AG04450 (cell line): ENCODE measurements at regions of chr1 and their contacts with region 1.

Region 1: DNA sequence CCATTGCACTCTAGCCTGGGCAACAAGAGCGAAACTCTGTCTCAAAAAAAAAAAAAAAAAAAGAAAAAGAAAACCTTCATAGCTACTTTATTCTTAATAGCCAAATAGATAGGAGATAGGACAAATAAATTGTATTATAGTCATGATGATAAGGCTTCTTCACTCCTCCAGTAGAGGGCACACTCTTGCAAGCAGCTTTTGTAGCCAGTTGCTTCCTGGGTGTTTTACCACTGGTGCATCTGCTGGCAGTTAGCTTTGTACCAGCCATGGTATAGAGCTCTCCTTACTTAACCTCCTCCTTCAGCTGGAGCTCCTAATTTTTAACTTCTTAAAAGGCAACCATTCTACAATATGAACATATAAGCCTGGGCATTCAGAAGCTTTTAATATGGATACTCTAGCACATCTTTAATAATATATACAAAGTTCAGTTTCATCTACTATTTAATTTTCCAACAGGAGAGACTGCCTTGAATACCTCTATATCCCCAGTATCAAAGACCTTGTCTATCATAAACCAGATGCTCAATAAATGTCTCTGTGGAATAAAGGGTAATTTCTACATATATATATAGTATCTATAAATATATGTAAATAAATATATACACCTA is 35.8 kb downstream of the EVI5 start:
- DNase-seq: no peak
- H3K4me3 ChIP-seq: no peak overlapping the region
- H3K27ac ChIP-seq: no peak overlapping the region
- H3K27me3 ChIP-seq: no peaks in the 10 kb centered on the region
- CTCF ChIP-seq: peak; percentile 78

Region 2: GRCh38 chr1:92736395-92736794 is 12.7 kb before region 1 on chr1:
- CTCF ChIA-PET with region 1: interaction called, 15 read pairs
- POLR2A ChIA-PET with region 1: no interaction called
- DNase-seq: no peak
- H3K4me3 ChIP-seq: no peak overlapping the region
- H3K27ac ChIP-seq: no peak overlapping the region
- H3K27me3 ChIP-seq: no peaks in the 10 kb centered on the region
- CTCF ChIP-seq: peak; percentile 46

Region 3: DNA sequence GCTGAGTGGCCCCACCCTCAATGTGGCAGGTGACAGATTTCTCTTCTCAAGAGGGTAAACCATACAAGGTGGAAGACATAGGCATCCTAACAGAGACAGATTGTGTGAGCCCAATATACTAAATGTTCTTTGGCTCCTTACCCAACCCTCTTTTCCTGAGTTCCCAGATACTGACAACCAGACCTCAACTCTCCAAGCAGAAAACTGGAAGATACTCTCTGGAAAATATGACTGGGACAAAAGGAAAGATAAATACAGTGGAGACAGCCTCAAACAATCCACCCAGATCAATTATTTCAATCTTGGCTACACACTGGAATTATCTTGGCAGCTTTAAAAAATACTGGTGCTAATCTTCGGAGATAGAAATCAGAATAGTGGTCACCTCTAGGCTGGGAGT is 29.2 kb after region 1 on chr1:
- CTCF ChIA-PET with region 1: interaction called, 16 read pairs
- POLR2A ChIA-PET with region 1: no interaction called
- DNase-seq: no peak
- H3K4me3 ChIP-seq: no peak overlapping the region
- H3K27ac ChIP-seq: no peak overlapping the region
- H3K27me3 ChIP-seq: no peaks in the 10 kb centered on the region
- CTCF ChIP-seq: no peak

Region 4: GRCh38 chr1:92817986-92818764 is 69.0 kb after region 1 on chr1:
- CTCF ChIA-PET with region 1: interaction called, 57 read pairs
- POLR2A ChIA-PET with region 1: no interaction called
- DNase-seq: no peak
- H3K4me3 ChIP-seq: no peak overlapping the region
- H3K27ac ChIP-seq: no peak overlapping the region
- H3K27me3 ChIP-seq: no peaks in the 10 kb centered on the region
- CTCF ChIP-seq: peak; percentile 74

Region 5: GRCh38 chr1:92837062-92837461 is 87.9 kb after region 1 on chr1:
- CTCF ChIA-PET with region 1: interaction called, 14 read pairs
- POLR2A ChIA-PET with region 1: interaction called, 12 read pairs
- DNase-seq: no peak
- H3K4me3 ChIP-seq: no peak overlapping the region
- H3K27ac ChIP-seq: no peak overlapping the region
- H3K27me3 ChIP-seq: no peaks in the 10 kb centered on the region
- CTCF ChIP-seq: no peak

Region 6: GRCh38 chr1:93061895-93062792 is 313.0 kb after region 1 on chr1:
- CTCF ChIA-PET with region 1: no interaction called
- POLR2A ChIA-PET with region 1: no interaction called
- DNase-seq: no peak
- H3K4me3 ChIP-seq: no peak overlapping the region
- H3K27ac ChIP-seq: no peak overlapping the region
- H3K27me3 ChIP-seq: peaks cover 16% of the 10 kb centered on the region
- CTCF ChIP-seq: peak; percentile 47